BJ (cell line): ENCODE measurements at regions of chr2 and their contacts with region 1.

Region 1: DNA sequence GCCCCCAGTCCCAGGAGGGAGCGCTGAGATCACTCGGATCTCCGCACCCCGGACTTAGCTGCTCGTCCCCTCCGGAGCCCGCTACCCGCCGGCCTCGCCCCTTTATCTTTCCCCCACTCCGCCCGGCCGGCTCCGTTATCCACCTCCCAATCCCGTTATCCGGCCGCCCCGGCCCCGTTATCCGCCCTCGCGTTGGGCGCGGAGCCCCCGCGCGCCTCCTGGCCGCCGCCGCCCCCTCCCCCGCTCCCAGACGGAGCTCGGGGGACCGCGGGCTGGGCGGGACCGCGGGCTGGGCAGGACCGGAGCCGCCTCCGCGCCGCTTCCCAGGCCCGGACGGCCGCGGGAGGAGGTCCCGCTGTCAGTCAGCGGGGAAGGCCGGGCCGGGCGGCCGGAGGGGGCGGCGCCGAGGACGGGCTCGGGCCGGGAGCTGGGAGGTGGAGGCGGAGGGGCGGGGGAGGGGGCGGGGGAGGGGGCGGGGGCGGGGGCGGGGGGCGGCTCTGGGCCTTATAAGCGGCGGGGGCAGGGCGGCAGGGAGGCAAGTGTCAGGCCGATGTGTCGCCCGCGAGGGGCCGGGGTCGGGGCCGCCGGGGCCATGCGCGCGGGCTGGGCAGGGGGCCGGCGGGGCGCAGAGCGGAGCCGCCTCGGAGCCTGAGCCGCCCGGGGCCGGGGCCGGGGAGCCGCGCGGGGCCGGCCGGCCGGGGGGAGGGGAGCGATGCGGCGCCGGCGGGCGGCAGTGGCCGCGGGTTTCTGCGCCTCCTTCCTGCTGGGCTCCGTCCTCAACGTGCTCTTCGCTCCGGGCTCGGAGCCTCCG is at the start of gene PKDCC:
- DNase-seq: no peak
- H3K4me3 ChIP-seq: peak within 1 kb of the TSS; percentile 43
- H3K27me3 ChIP-seq: peaks cover 12% of the 10 kb centered on the region
- CTCF ChIP-seq: no peak
- polyA plus RNA-seq, gene PKDCC: 3.0 and 6.6 TPM in 2 replicates

Region 2: GRCh38 chr2:41897712-41898111 is 150.0 kb before region 1 on chr2:
- CTCF ChIA-PET with region 1: interaction called, 3 read pairs
- POLR2A ChIA-PET with region 1: interaction called, 13 read pairs
- DNase-seq: no peak
- H3K4me3 ChIP-seq: no peak overlapping the region
- H3K27me3 ChIP-seq: no peaks in the 10 kb centered on the region; the same call in none of the 2 replicates
- CTCF ChIP-seq: no peak

Region 3: GRCh38 chr2:42028571-42029148 is 19.0 kb before region 1 on chr2:
- CTCF ChIA-PET with region 1: no interaction called
- POLR2A ChIA-PET with region 1: no interaction called
- DNase-seq: no peak
- H3K4me3 ChIP-seq: no peak overlapping the region
- H3K27me3 ChIP-seq: peaks cover 4% of the 10 kb centered on the region; the same call in 1 of the 2 replicates
- CTCF ChIP-seq: no peak

Region 4: GRCh38 chr2:42368817-42369531 is 321.3 kb after region 1 on chr2:
- CTCF ChIA-PET with region 1: no interaction called
- POLR2A ChIA-PET with region 1: interaction called, 15 read pairs
- DNase-seq: no peak
- H3K4me3 ChIP-seq: no peak overlapping the region
- H3K27me3 ChIP-seq: peaks cover 7% of the 10 kb centered on the region
- CTCF ChIP-seq: no peak